ENCODE measurements at regions of chr2 and their contacts with region 1.

Region 1: GRCh38 chr2:174634130-174635014 is 36.8 kb upstream of the WIPF1 start:
- DNase-seq: peak; percentile 73
- H3K4me3 Mint-ChIP-seq: peak overlapping the region; percentile 78
- H3K27ac Mint-ChIP-seq: peak overlapping the region; percentile 95
- H3K4me1 Mint-ChIP-seq: peaks cover 56% of the 10 kb centered on the region
- H3K27me3 Mint-ChIP-seq: no peaks in the 10 kb centered on the region

Region 2: DNA sequence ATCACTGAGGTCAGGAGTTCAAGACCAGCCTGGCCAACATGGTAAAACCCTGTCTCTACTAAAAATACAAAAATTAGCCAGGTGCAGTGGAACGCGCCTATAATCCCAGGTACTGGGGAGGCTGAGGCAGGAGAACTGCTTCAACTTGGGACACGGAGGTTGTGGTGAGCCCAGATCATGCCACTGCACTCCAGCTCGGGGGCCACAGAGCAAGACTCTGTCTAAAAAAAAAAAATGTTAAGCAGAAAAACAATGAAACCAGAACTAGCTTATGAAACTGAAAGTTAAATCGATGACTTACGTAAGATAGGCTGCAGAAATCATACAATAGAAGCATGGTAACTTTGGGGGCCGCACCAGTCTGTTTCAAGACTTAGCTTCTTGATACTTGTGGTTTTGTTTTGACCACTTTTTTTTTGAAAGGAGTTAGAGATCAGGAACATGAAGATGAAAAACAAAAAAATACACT is 141.4 kb before region 1 on chr2:
- CTCF ChIA-PET with region 1: interaction called, 4 read pairs
- POLR2A ChIA-PET with region 1: interaction called, 4 read pairs
- intact Hi-C with region 1: loop called (anchors 1 kb)
- DNase-seq: peak; percentile 73
- H3K4me3 Mint-ChIP-seq: peak overlapping the region; percentile 70
- H3K27ac Mint-ChIP-seq: peak overlapping the region; percentile 93
- H3K4me1 Mint-ChIP-seq: peaks cover 72% of the 10 kb centered on the region
- H3K27me3 Mint-ChIP-seq: no peaks in the 10 kb centered on the region

Region 3: GRCh38 chr2:174577967-174578589 is 56.3 kb before region 1 on chr2:
- CTCF ChIA-PET with region 1: interaction called, 10 read pairs
- POLR2A ChIA-PET with region 1: no interaction called
- intact Hi-C with region 1: no loop called
- DNase-seq: peak; percentile 70
- H3K4me3 Mint-ChIP-seq: no peak overlapping the region
- H3K27ac Mint-ChIP-seq: peak overlapping the region; percentile 54
- H3K4me1 Mint-ChIP-seq: peaks cover 78% of the 10 kb centered on the region
- H3K27me3 Mint-ChIP-seq: no peaks in the 10 kb centered on the region

Region 4: DNA sequence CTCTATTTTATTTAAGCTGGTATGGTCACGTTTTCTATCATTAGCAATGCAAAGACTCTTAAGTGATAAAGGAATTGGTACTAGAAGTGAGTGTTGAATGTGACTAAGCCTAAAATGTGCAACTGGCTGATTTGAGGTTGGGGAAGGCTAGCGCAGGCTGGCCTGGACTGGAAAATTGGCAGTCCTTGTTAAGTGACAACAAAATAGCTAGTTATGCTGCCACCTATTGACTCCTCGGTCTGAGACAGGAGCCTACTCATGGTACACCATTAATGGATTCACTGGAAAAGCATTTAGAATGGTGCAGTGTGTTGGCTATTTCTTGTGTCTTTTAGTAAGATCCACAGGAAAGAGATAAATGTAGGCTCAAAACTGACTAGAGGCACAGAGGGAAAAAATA is 31.1 kb before region 1 on chr2:
- CTCF ChIA-PET with region 1: interaction called, 45 read pairs
- POLR2A ChIA-PET with region 1: interaction called, 126 read pairs
- intact Hi-C with region 1: loop called (anchors 1 kb)
- DNase-seq: peak; percentile 80
- H3K4me3 Mint-ChIP-seq: no peak overlapping the region
- H3K27ac Mint-ChIP-seq: peak overlapping the region; percentile 85
- H3K4me1 Mint-ChIP-seq: peaks cover 85% of the 10 kb centered on the region
- H3K27me3 Mint-ChIP-seq: no peaks in the 10 kb centered on the region

Region 5: DNA sequence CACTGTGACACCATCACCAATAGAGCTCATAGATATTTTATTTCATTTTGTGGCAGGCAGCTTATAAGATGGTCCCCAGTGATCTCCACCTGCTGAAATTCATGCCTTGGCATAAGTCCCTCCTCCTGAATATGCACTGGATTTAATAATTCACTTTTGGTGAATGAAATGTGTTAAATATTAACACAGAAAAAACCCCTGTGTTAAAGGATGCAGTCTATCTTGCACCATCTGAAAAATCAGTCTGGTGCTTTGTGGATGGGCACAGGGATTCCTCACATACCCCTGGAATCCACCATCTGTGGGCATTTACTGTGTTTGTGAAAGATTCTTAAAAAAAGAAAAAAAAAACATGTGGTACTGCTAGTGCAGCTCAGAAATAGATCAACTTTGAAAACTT is 10.7 kb before region 1 on chr2:
- CTCF ChIA-PET with region 1: interaction called, 5 read pairs
- POLR2A ChIA-PET with region 1: interaction called, 13 read pairs
- intact Hi-C with region 1: no loop called
- DNase-seq: no peak
- H3K4me3 Mint-ChIP-seq: no peak overlapping the region
- H3K27ac Mint-ChIP-seq: peak overlapping the region; percentile 48
- H3K4me1 Mint-ChIP-seq: peaks cover 68% of the 10 kb centered on the region
- H3K27me3 Mint-ChIP-seq: no peaks in the 10 kb centered on the region

Region 6: DNA sequence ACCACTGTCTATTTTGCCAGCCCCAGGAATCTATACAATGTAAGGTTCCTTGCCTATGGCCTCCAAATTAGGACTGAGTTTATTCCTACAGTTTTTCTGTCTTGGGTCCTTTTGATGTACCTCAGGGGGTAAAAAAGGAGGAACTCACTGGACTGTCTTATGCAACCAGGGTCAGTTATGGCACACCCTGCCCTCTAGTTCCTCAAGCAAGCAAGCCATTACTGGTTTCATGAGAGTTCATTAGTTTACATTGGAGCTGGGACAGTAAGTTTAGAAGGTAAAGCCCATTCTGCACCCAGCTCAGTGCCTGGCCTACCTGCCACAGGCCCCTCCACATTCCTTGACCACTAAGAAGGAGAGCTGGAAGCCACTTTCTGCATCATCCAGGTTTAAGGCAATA is 31.9 kb after region 1 on chr2:
- CTCF ChIA-PET with region 1: no interaction called
- POLR2A ChIA-PET with region 1: no interaction called
- intact Hi-C with region 1: no loop called
- DNase-seq: no peak
- H3K4me3 Mint-ChIP-seq: no peak overlapping the region
- H3K27ac Mint-ChIP-seq: no peak overlapping the region
- H3K4me1 Mint-ChIP-seq: peaks cover 20% of the 10 kb centered on the region
- H3K27me3 Mint-ChIP-seq: no peaks in the 10 kb centered on the region

Region 7: GRCh38 chr2:174682578-174683391 is 48.4 kb after region 1 on chr2:
- CTCF ChIA-PET with region 1: interaction called, 62 read pairs
- POLR2A ChIA-PET with region 1: interaction called, 17 read pairs
- intact Hi-C with region 1: loop called (anchors 1 kb)
- DNase-seq: peak; percentile 62
- H3K4me3 Mint-ChIP-seq: peak overlapping the region; percentile 86
- H3K27ac Mint-ChIP-seq: peak overlapping the region; percentile 88
- H3K4me1 Mint-ChIP-seq: peaks cover 54% of the 10 kb centered on the region
- H3K27me3 Mint-ChIP-seq: no peaks in the 10 kb centered on the region